ENCODE measurements at regions of chr1 and their contacts with region 1.

Region 1: DNA sequence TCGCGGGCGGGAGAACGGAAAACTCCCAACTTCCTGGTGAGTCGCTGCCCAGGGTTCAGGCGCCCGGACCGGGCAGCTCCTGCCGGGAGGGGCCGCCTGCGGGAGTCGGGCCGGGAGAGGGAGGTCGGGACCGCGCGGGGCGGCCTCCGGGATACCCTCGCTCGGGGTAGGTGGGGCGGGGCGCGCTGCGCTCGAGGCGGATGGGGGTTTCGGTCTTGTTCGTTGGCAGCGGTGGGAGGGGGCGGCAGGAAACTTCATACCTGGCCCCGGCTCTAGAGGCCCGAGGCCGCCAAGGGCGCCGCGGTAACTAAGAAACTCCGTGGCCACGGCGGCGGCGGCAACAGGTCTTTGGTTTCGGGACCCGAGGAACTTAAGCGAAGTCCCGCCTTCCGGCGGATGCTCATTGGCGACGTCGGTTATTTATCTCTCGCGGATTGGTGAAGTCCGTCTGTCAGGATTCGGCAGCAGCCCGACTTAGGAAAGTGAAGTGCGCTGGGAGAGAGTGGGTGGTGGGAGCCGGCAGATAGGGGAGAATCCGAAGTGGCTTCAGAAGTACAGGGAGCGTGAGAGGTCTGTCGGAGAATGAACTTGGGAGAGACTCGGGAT is 546 bp downstream of the NEK7 start:
- DNase-seq: peak; percentile 63 to 81 (median 79)
- ATAC-seq: peak; percentile 65
- H3K4me3 ChIP-seq: peak overlapping the region; percentile 99
- H3K4me3 Mint-ChIP-seq: peak overlapping the region; percentile 97 to 100 (median 100)
- H3K27ac ChIP-seq: peak overlapping the region; percentile 96
- H3K27ac Mint-ChIP-seq: peak overlapping the region; percentile 97 to 100 (median 99)
- H3K4me1 ChIP-seq: peaks cover 28 to 33% of the 10 kb centered on the region in 2 donors
- H3K4me1 Mint-ChIP-seq: peaks cover 26 to 53% (median 48%) of the 10 kb centered on the region in 7 donors
- H3K27me3 ChIP-seq: no peaks in the 10 kb centered on the region
- H3K27me3 Mint-ChIP-seq: no peaks in the 10 kb centered on the region

Region 2: GRCh38 chr1:197146197-197146889 is 1011.0 kb before region 1 on chr1 and contains the start of gene ASPM:
- CTCF ChIA-PET with region 1: no interaction called
- POLR2A ChIA-PET with region 1: no interaction called
- intact Hi-C with region 1: loop called (anchors 2 kb)
- DNase-seq: peak; percentile 87 to 95 (median 93)
- ATAC-seq: peak; percentile 99
- H3K4me3 ChIP-seq: peak within 1 kb of the TSS; percentile 71
- H3K4me3 Mint-ChIP-seq: peak within 1 kb of the TSS; percentile 89 to 98 (median 92)
- H3K27ac ChIP-seq: peak within 1 kb of the TSS; percentile 74
- H3K27ac Mint-ChIP-seq: peak within 1 kb of the TSS; percentile 76 to 96 (median 94)
- H3K4me1 ChIP-seq: peaks cover 0 to 6% of the 10 kb centered on the region in 2 donors
- H3K4me1 Mint-ChIP-seq: peaks cover 7 to 23% (median 11%) of the 10 kb centered on the region in 7 donors
- H3K27me3 ChIP-seq: no peaks in the 10 kb centered on the region
- H3K27me3 Mint-ChIP-seq: peaks cover 0 to 11% (median 4%) of the 10 kb centered on the region in 5 donors
- total RNA-seq, gene ASPM: 0.08 to 48.8 (median 0.24) TPM

Region 3: GRCh38 chr1:197775282-197776262 is 381.8 kb before region 1 on chr1 and contains the start of gene DENND1B:
- CTCF ChIA-PET with region 1: interaction called, 3 read pairs
- POLR2A ChIA-PET with region 1: no interaction called
- intact Hi-C with region 1: loop called (anchors 5 kb)
- DNase-seq: peak; percentile 64 to 83 (median 81)
- ATAC-seq: peak; percentile 80
- H3K4me3 ChIP-seq: peak within 1 kb of the TSS; percentile 68
- H3K4me3 Mint-ChIP-seq: peak within 1 kb of the TSS; percentile 87 to 98 (median 92)
- H3K27ac ChIP-seq: peak within 1 kb of the TSS; percentile 74
- H3K27ac Mint-ChIP-seq: peak within 1 kb of the TSS; percentile 90 to 98 (median 97)
- H3K4me1 ChIP-seq: peaks cover 19 to 34% of the 10 kb centered on the region in 2 donors
- H3K4me1 Mint-ChIP-seq: peaks cover 32 to 72% (median 62%) of the 10 kb centered on the region in 7 donors
- H3K27me3 ChIP-seq: no peaks in the 10 kb centered on the region
- H3K27me3 Mint-ChIP-seq: no peaks in the 10 kb centered on the region
- total RNA-seq, gene DENND1B: 14.2 to 28.7 (median 23.2) TPM

Region 4: GRCh38 chr1:198102454-198102827 is 54.9 kb before region 1 on chr1:
- CTCF ChIA-PET with region 1: no interaction called
- POLR2A ChIA-PET with region 1: no interaction called
- intact Hi-C with region 1: loop called in 1 of 2 experiments (anchors 5 kb)
- DNase-seq: peak in 4 of 9 donors; percentile 10 to 25 (median 16)
- ATAC-seq: peak; percentile 68
- H3K4me3 ChIP-seq: no peak overlapping the region
- H3K4me3 Mint-ChIP-seq: peak overlapping the region in 7 of 10 donors; percentile 16 to 49 (median 36)
- H3K27ac ChIP-seq: no peak overlapping the region
- H3K27ac Mint-ChIP-seq: peak overlapping the region in 5 of 9 donors; percentile 3 to 65 (median 24)
- H3K4me1 ChIP-seq: peaks cover 10 to 15% of the 10 kb centered on the region in 2 donors
- H3K4me1 Mint-ChIP-seq: peaks cover 12 to 27% (median 17%) of the 10 kb centered on the region in 7 donors
- H3K27me3 ChIP-seq: no peaks in the 10 kb centered on the region
- H3K27me3 Mint-ChIP-seq: no peaks in the 10 kb centered on the region

Region 5: DNA sequence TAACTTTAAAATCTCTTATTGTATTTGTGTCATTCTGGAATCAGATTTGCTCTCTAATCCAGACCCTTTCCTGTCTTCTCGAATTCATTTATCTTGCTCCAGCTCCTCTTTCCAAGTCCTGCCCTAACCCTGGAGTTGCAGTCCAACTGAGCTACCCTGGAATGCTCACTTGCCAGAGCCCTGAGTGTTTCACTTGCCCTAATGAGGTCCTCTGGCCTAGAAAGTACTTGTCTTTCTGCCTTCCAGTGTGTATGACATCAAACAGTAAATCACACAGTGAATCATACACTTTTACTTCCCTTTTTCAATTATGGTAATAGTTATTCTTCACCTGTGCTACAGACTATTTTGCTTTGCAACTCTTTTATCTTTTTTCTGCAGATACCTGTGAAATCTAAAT is 96.3 kb after region 1 on chr1:
- CTCF ChIA-PET with region 1: interaction called, 3 read pairs
- POLR2A ChIA-PET with region 1: no interaction called
- intact Hi-C with region 1: loop called (anchors 5 kb)
- DNase-seq: no peak
- ATAC-seq: peak; percentile 66
- H3K4me3 ChIP-seq: no peak overlapping the region
- H3K4me3 Mint-ChIP-seq: peak overlapping the region in 1 of 10 donors; percentile 50
- H3K27ac ChIP-seq: no peak overlapping the region
- H3K27ac Mint-ChIP-seq: peak overlapping the region in 8 of 9 donors; percentile 8 to 79 (median 61)
- H3K4me1 ChIP-seq: no peaks in the 10 kb centered on the region
- H3K4me1 Mint-ChIP-seq: peaks cover 24 to 59% (median 50%) of the 10 kb centered on the region in 7 donors
- H3K27me3 ChIP-seq: no peaks in the 10 kb centered on the region
- H3K27me3 Mint-ChIP-seq: no peaks in the 10 kb centered on the region

Region 6: GRCh38 chr1:198520524-198521254 is 363.3 kb after region 1 on chr1:
- CTCF ChIA-PET with region 1: no interaction called
- POLR2A ChIA-PET with region 1: no interaction called
- intact Hi-C with region 1: loop called (anchors 2 to 5 kb)
- DNase-seq: peak in 3 of 9 donors; percentile 11 to 27 (median 18)
- ATAC-seq: peak; percentile 66
- H3K4me3 ChIP-seq: peak overlapping the region; percentile 44
- H3K4me3 Mint-ChIP-seq: peak overlapping the region; percentile 65 to 79 (median 71)
- H3K27ac ChIP-seq: peak overlapping the region; percentile 81
- H3K27ac Mint-ChIP-seq: peak overlapping the region; percentile 48 to 95 (median 93)
- H3K4me1 ChIP-seq: peaks cover 40 to 48% of the 10 kb centered on the region in 2 donors
- H3K4me1 Mint-ChIP-seq: peaks cover 30 to 77% (median 69%) of the 10 kb centered on the region in 7 donors
- H3K27me3 ChIP-seq: no peaks in the 10 kb centered on the region
- H3K27me3 Mint-ChIP-seq: no peaks in the 10 kb centered on the region

Region 7: DNA sequence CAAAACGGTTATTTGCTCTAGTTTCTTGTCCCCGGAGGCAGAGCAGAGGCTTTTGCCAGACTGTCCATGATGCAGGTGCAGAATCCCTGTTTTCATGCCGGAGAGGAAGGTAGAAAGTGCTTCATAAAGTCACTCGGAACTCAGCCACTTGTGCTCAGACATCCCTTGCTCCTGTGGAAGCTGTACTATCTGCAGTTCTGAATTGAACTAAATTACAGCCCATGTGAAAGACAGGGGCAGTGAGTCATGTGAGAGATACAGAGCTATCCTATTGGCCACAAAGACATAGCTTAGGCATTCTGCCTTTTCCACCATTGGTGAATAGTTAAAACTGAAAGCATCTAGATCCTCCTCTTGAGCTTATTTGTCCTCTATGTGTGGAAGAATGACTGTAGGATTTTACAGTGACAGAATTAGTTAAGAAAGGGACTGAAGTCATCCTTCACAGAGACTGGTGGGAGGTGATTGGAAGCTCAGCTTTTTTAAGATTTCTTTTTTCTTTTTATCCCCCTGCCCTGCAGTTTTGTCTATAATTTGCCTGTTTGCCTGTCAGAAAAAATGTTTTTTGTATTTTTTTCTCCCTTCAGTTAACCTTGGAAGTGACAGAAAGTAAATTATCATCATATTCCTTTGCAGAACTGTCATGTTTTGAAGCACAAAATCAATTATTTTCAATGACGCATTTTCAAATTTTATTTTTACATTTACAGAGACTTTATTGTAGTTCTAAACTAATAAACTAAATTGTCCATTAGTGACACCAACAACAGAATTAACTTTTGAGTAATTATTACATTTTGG is 780.1 kb after region 1 on chr1:
- CTCF ChIA-PET with region 1: no interaction called
- POLR2A ChIA-PET with region 1: interaction called, 4 read pairs
- intact Hi-C with region 1: loop called (anchors 5 to 10 kb)
- DNase-seq: peak in 8 of 9 donors; percentile 52 to 81 (median 72)
- ATAC-seq: peak; percentile 92
- H3K4me3 ChIP-seq: peak overlapping the region; percentile 47
- H3K4me3 Mint-ChIP-seq: peak overlapping the region in 3 of 10 donors; percentile 88 to 97 (median 92)
- H3K27ac ChIP-seq: peak overlapping the region; percentile 75
- H3K27ac Mint-ChIP-seq: peak overlapping the region in 7 of 9 donors; percentile 88 to 97 (median 92)
- H3K4me1 ChIP-seq: peaks cover 16 to 23% of the 10 kb centered on the region in 2 donors
- H3K4me1 Mint-ChIP-seq: peaks cover 6 to 28% (median 22%) of the 10 kb centered on the region in 7 donors
- H3K27me3 ChIP-seq: no peaks in the 10 kb centered on the region
- H3K27me3 Mint-ChIP-seq: no peaks in the 10 kb centered on the region

Region 8: DNA sequence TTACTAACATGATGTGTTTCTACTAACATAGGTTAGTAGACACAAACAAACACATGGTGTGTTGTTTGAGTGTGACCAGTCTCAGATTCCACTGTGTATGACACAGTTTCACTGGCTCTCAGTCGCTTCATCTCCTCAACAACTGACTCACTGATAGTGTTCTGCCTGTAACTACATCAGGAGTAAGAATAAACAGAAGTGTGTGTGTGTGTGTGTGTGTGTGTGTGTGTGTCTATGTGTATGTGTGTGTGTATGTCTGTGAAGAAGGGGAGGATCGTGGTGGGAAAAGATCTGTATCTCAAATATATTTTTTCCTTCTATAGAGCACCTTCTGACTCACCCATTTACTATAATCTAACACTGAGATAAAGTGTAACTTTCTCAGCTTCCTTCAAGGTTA is 872.5 kb after region 1 on chr1:
- CTCF ChIA-PET with region 1: no interaction called
- POLR2A ChIA-PET with region 1: no interaction called
- intact Hi-C with region 1: no loop called
- DNase-seq: no peak
- ATAC-seq: no peak
- H3K4me3 ChIP-seq: no peak overlapping the region
- H3K4me3 Mint-ChIP-seq: peak overlapping the region in 1 of 10 donors; percentile 28
- H3K27ac ChIP-seq: no peak overlapping the region
- H3K27ac Mint-ChIP-seq: no peak overlapping the region
- H3K4me1 ChIP-seq: no peaks in the 10 kb centered on the region
- H3K4me1 Mint-ChIP-seq: peaks cover 4 to 53% (median 16%) of the 10 kb centered on the region in 7 donors
- H3K27me3 ChIP-seq: no peaks in the 10 kb centered on the region
- H3K27me3 Mint-ChIP-seq: no peaks in the 10 kb centered on the region

Measured in naive thymus-derived CD4-positive, alpha-beta T cell (primary cell).